ENCODE measurements at regions of chr12 and their contacts with region 1.

Region 1: DNA sequence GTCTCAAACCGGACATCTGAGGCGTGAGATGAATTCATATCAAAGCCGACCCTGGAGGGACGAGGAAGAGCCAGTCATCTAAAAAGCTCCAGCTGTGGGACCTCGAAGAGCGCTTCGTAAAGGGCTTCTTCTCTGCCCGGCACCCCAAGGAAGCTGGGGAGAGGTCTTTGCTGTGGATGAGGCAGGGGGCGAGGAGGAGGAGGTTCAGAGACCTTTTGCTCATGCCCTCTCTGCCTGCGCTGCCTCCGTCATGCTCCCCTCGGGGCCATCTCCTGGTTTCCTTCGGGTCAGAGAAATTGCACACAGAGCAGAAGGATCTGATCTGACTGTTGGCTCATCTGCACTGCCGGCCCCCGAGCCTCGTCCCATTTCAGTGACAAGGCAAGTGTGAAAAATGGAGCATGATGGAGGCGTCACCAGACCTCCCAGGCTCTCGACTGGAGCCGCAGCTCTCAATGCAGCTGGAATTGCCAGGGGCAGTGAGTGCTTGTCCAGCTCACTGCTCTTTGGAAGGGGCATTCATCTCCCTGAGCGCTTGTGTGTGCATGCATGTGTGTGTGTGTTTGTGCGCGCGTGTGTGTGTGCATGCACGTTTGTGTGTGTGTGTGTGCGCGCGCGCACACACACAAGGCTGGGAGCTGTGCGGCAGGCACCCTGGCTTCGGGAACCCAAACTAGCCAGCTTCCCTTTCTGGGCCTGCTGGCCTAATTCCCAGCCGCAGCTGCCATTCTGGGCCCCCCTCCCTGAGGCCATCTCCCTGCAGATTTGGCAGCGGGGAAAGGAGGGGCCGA is 9.2 kb downstream of the CABP1 start:
- DNase-seq: no peak
- H3K4me3 ChIP-seq: peak overlapping the region; percentile 62
- H3K27ac ChIP-seq: no peak overlapping the region
- H3K27me3 ChIP-seq: peaks cover 40% of the 10 kb centered on the region
- CTCF ChIP-seq: no peak

Region 2: GRCh38 chr12:120167529-120168095 is 482.0 kb before region 1 on chr12:
- CTCF ChIA-PET with region 1: no interaction called
- POLR2A ChIA-PET with region 1: no interaction called
- DNase-seq: no peak
- H3K4me3 ChIP-seq: no peak overlapping the region
- H3K27ac ChIP-seq: no peak overlapping the region
- H3K27me3 ChIP-seq: no peaks in the 10 kb centered on the region
- CTCF ChIP-seq: no peak

Region 3: GRCh38 chr12:120580787-120581723 is 68.6 kb before region 1 on chr12 and contains the start of gene POP5:
- CTCF ChIA-PET with region 1: interaction called, 87 read pairs
- POLR2A ChIA-PET with region 1: interaction called, 5 read pairs
- DNase-seq: peak; percentile 95
- H3K4me3 ChIP-seq: peak within 1 kb of the TSS; percentile 100
- H3K27ac ChIP-seq: peak within 1 kb of the TSS; percentile 47
- H3K27me3 ChIP-seq: peaks cover 8% of the 10 kb centered on the region
- CTCF ChIP-seq: no peak
- polyA plus RNA-seq, gene POP5: 49.8 and 54.0 TPM in 2 replicates

Region 4: GRCh38 chr12:120677765-120678473 is 28.3 kb after region 1 on chr12:
- CTCF ChIA-PET with region 1: interaction called, 19 read pairs
- POLR2A ChIA-PET with region 1: no interaction called
- DNase-seq: no peak
- H3K4me3 ChIP-seq: no peak overlapping the region
- H3K27ac ChIP-seq: no peak overlapping the region
- H3K27me3 ChIP-seq: peaks cover 3% of the 10 kb centered on the region
- CTCF ChIP-seq: no peak

Region 5: GRCh38 chr12:120713861-120714482 is 64.3 kb after region 1 on chr12:
- CTCF ChIA-PET with region 1: interaction called, 10 read pairs
- POLR2A ChIA-PET with region 1: no interaction called
- DNase-seq: peak; percentile 58
- H3K4me3 ChIP-seq: no peak overlapping the region
- H3K27ac ChIP-seq: no peak overlapping the region
- H3K27me3 ChIP-seq: no peaks in the 10 kb centered on the region
- CTCF ChIP-seq: peak; percentile 88

Region 6: DNA sequence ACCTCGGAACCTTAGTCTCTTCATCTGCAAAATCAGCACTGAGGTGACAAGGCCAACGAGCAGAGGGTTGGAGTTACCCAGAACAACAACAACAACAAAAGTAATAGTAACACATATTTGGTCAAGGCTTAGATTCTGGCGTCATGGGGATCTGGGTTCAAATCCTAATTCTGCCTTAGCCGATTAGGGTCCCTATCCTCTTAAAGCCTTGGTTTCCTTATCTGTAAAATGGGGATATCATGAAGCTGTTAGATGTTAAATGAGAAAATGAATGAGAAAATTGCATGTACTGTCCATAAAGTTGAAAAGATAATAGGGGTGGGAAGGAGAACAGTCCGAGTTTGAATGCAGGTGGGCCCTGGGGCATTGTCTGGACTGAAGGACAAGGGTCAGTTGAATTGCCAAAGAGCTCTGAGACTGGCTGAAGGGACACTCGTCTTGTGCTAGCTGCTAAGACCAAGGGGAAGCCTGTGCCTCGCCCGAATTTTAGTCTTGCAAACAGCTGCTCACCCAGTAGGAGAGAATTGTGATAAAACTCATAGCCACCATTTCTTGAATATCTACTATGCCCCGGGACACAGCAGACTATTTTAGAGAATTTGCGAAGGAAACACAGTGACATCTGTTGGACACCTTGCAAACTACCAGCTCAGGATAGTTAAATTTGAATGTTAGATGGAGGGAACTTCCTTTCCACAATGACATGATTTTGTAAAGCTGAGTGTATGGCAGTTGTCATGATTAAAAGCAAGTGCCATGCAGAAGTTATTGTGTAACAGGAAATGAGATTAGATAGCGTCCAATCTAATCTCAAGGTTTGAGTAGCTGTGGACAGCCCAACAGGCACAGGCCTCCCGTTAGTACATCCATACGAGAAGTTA is 321.9 kb after region 1 on chr12:
- CTCF ChIA-PET with region 1: interaction called, 76 read pairs
- POLR2A ChIA-PET with region 1: no interaction called
- DNase-seq: peak; percentile 45
- H3K4me3 ChIP-seq: no peak overlapping the region
- H3K27ac ChIP-seq: no peak overlapping the region
- H3K27me3 ChIP-seq: peaks cover 11% of the 10 kb centered on the region
- CTCF ChIP-seq: peak; percentile 82